ENCODE measurements at regions of chr2 and their contacts with region 1.

Region 1: GRCh38 chr2:230503798-230504197 is 87.8 kb downstream of the SP100 start:
- DNase-seq: no peak
- ATAC-seq: no peak
- H3K4me3 Mint-ChIP-seq: no peak overlapping the region
- H3K27ac Mint-ChIP-seq: peak overlapping the region; percentile 37
- H3K4me1 Mint-ChIP-seq: peaks cover 42% of the 10 kb centered on the region
- H3K27me3 Mint-ChIP-seq: no peaks in the 10 kb centered on the region
- CTCF ChIP-seq: no peak

Region 2: GRCh38 chr2:230383453-230383852 is 120.3 kb before region 1 on chr2:
- CTCF ChIA-PET with region 1: no interaction called
- POLR2A ChIA-PET with region 1: no interaction called
- intact Hi-C with region 1: no loop called
- DNase-seq: no peak
- ATAC-seq: no peak
- H3K4me3 Mint-ChIP-seq: no peak overlapping the region
- H3K27ac Mint-ChIP-seq: no peak overlapping the region
- H3K4me1 Mint-ChIP-seq: no peaks in the 10 kb centered on the region
- H3K27me3 Mint-ChIP-seq: no peaks in the 10 kb centered on the region
- CTCF ChIP-seq: no peak

Region 3: DNA sequence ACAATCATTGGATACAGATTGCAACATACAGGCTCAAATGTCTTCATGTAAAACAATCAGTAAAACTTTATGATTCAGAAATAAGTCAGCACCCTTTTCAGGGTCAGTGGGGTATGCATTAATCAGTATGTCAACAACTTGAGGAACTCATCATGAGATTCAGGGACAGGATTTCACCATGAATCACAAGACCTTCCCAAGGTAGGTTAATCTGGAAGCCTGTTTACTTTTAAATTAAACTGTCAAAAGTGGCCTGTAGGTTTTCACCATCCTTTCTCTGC is 17.0 kb after region 1 on chr2:
- CTCF ChIA-PET with region 1: no interaction called
- POLR2A ChIA-PET with region 1: no interaction called
- intact Hi-C with region 1: loop called (anchors 2 kb)
- DNase-seq: no peak
- ATAC-seq: no peak
- H3K4me3 Mint-ChIP-seq: no peak overlapping the region
- H3K27ac Mint-ChIP-seq: peak overlapping the region; percentile 30
- H3K4me1 Mint-ChIP-seq: peaks cover 16% of the 10 kb centered on the region
- H3K27me3 Mint-ChIP-seq: no peaks in the 10 kb centered on the region
- CTCF ChIP-seq: no peak

Region 4: DNA sequence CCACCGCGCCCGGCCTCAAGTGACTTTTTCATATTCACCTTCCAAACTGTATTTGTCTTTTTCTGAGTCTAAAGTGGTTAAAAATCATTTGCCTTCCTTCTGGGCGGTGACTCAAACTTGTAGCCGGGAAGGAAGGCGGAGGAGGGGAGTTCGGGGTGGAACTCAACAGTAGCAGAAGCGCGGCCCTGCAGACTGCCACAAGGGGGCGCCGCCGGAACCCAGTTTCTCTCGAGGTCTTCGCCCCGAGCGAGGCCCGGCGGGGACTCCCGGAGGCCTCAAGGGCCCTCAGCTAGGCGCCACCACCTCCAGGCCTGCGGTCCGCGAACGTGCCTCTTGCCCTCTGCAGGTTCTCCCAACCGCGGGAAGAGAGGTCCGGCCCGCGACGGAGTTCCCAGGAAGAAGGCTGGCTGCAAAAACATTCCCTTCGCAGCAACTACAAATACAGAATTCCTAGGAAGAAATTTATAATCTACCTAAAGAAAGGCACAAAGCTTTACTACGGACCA is 344.1 kb after region 1 on chr2:
- CTCF ChIA-PET with region 1: no interaction called
- POLR2A ChIA-PET with region 1: no interaction called
- intact Hi-C with region 1: no loop called
- DNase-seq: peak; percentile 84
- ATAC-seq: peak; percentile 97
- H3K4me3 Mint-ChIP-seq: peak overlapping the region; percentile 50
- H3K27ac Mint-ChIP-seq: no peak overlapping the region
- H3K4me1 Mint-ChIP-seq: peaks cover 8% of the 10 kb centered on the region
- H3K27me3 Mint-ChIP-seq: peaks cover 22% of the 10 kb centered on the region
- CTCF ChIP-seq: peak; percentile 24

Measured in activated B cell treated with CpG ODN at 0.5 μM for 24 hours (primary cell).